Activated B cell treated with CpG ODN at 0.5 μM for 24 hours (primary cell): ENCODE measurements at regions of chr1 and their contacts with region 1.

Region 1: DNA sequence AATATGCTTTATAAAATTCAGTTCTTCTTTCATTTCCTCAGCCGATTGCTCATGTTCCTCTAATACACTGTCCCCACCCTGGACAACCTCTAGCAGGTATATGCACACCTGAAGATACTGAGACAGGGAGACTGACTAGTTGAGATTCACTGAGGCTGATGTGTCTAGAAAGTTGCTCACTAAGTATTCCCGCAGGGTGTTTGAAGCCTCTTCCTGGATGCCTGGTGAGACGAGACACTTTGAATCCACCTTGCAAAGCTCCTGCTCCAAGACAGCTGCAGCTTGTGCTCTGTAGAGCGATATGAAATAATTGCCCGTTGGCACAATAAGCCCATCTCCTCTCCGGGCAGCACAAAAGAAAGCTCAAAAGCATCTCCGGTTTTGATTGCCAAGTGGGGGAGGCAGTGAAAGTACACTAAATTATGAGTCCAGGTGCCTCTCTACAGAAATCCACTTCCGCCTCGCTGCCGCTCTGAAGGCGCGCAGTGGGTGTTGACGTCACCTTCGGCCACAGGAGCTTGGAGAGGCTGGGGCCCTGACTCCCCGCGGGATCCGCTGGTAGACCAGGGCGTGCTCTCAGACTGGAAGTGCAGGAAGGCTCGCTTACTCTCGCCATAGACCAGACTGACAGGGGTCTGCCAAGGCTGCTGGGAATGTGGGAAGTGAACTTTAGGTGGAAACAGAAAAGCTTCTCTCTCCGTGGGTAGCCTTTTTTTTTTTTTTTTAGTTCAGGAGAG is 46.3 kb downstream of the GPA33 start:
- DNase-seq: peak; percentile 44
- ATAC-seq: peak; percentile 94
- H3K4me3 Mint-ChIP-seq: peak overlapping the region; percentile 83
- H3K27ac Mint-ChIP-seq: peak overlapping the region; percentile 32
- H3K4me1 Mint-ChIP-seq: peaks cover 16% of the 10 kb centered on the region
- H3K27me3 Mint-ChIP-seq: peaks cover 14% of the 10 kb centered on the region
- CTCF ChIP-seq: no peak

Region 2: GRCh38 chr1:166975361-166976129 is 68.4 kb before region 1 on chr1 and contains the start of gene ILDR2:
- CTCF ChIA-PET with region 1: no interaction called
- POLR2A ChIA-PET with region 1: no interaction called
- intact Hi-C with region 1: loop called (anchors 5 kb)
- DNase-seq: peak; percentile 51
- ATAC-seq: peak; percentile 88
- H3K4me3 Mint-ChIP-seq: peak within 1 kb of the TSS; percentile 77
- H3K27ac Mint-ChIP-seq: peak within 1 kb of the TSS; percentile 13
- H3K4me1 Mint-ChIP-seq: peaks cover 15% of the 10 kb centered on the region
- H3K27me3 Mint-ChIP-seq: peaks cover 37% of the 10 kb centered on the region
- CTCF ChIP-seq: no peak
- total RNA-seq, gene ILDR2: 1.00 and 1.2 TPM in 2 replicates

Region 3: DNA sequence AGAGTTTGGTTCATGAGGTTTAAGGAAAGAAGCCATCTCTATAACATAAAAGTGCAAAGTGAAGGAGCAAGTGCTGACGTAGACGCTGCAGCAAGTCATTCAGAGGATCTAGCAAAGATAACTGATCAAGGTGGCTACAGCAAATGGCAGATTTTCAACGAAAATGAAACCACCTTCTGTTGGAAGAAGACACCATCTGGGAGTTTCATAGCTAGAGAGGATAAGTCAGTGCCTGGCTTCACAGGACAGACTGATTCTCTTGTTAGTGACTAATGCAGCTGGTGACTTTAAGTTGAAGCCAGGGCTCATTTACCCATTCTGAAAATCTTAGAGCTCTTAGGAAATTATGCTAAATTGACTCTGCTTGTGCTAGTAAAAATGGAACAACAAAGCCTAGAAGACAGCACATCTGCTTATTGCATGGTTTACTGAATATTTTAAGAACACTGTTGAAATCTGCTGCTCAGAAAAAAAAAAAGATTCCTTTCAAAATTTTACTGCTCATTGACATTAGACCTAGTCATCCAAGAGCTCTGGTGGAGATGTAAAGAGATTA is 44.3 kb before region 1 on chr1:
- CTCF ChIA-PET with region 1: no interaction called
- POLR2A ChIA-PET with region 1: no interaction called
- intact Hi-C with region 1: loop called (anchors 5 kb)
- DNase-seq: no peak
- ATAC-seq: no peak
- H3K4me3 Mint-ChIP-seq: no peak overlapping the region
- H3K27ac Mint-ChIP-seq: no peak overlapping the region
- H3K4me1 Mint-ChIP-seq: no peaks in the 10 kb centered on the region
- H3K27me3 Mint-ChIP-seq: peaks cover 17% of the 10 kb centered on the region
- CTCF ChIP-seq: no peak

Region 4: DNA sequence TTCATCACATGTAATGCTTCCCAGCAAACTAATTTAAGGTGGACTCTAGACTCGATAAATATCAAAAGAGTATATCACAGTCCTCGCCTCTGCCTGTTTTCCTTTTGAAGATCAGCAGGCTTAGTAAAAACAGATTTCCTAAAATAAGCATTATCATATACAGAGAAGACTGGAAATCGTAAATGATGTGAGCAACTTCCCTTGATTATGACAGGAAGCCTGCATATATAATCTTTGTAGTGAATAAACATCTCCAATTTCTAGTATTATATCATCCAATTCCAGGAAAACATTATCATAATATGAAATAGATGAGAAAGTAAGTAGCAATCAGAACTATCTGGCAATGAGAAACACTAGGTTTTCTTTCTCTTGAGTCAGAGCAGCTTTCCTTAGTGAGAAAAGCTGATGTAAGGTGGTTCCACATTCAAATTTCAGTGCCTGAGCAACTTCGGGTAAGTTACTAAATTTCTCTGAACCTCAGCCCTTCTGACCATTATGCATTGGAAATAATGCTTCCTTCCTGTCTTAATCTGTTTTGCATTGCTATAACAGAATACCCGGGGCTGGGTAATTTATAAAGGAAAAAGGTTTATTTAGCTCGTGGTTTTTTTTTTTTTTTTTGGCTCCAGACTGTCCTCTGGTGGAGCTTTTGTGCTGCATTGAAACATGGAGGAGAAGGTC is 164.2 kb after region 1 on chr1:
- CTCF ChIA-PET with region 1: no interaction called
- POLR2A ChIA-PET with region 1: no interaction called
- intact Hi-C with region 1: no loop called
- DNase-seq: no peak
- ATAC-seq: no peak
- H3K4me3 Mint-ChIP-seq: no peak overlapping the region
- H3K27ac Mint-ChIP-seq: no peak overlapping the region
- H3K4me1 Mint-ChIP-seq: peaks cover 7% of the 10 kb centered on the region
- H3K27me3 Mint-ChIP-seq: no peaks in the 10 kb centered on the region
- CTCF ChIP-seq: no peak